PC-3 (cell line): ENCODE measurements at regions of chr6 and their contacts with region 1.

Region 1: GRCh38 chr6:134063966-134064445 is 11.6 kb upstream of the SLC2A12 start:
- DNase-seq: peak; percentile 74
- ATAC-seq: peak; percentile 86
- H3K4me3 ChIP-seq: no peak overlapping the region
- H3K27ac ChIP-seq: no peak overlapping the region
- H3K4me1 ChIP-seq: peaks cover 24% of the 10 kb centered on the region
- H3K27me3 ChIP-seq: no peaks in the 10 kb centered on the region
- CTCF ChIP-seq: peak; percentile 87

Region 2: GRCh38 chr6:133814797-133815196 is 249.2 kb before region 1 on chr6:
- CTCF ChIA-PET with region 1: no interaction called
- POLR2A ChIA-PET with region 1: no interaction called
- intact Hi-C with region 1: no loop called
- DNase-seq: peak; percentile 9
- ATAC-seq: no peak
- H3K4me3 ChIP-seq: no peak overlapping the region
- H3K27ac ChIP-seq: no peak overlapping the region
- H3K4me1 ChIP-seq: no peaks in the 10 kb centered on the region
- H3K27me3 ChIP-seq: no peaks in the 10 kb centered on the region
- CTCF ChIP-seq: no peak

Region 3: GRCh38 chr6:133923938-133924593 is 139.9 kb before region 1 on chr6:
- CTCF ChIA-PET with region 1: interaction called, 3 read pairs
- POLR2A ChIA-PET with region 1: no interaction called
- intact Hi-C with region 1: loop called (anchors 1 kb)
- DNase-seq: peak; percentile 76
- ATAC-seq: peak; percentile 88
- H3K4me3 ChIP-seq: no peak overlapping the region
- H3K27ac ChIP-seq: no peak overlapping the region
- H3K4me1 ChIP-seq: no peaks in the 10 kb centered on the region
- H3K27me3 ChIP-seq: no peaks in the 10 kb centered on the region
- CTCF ChIP-seq: peak; percentile 88

Region 4: DNA sequence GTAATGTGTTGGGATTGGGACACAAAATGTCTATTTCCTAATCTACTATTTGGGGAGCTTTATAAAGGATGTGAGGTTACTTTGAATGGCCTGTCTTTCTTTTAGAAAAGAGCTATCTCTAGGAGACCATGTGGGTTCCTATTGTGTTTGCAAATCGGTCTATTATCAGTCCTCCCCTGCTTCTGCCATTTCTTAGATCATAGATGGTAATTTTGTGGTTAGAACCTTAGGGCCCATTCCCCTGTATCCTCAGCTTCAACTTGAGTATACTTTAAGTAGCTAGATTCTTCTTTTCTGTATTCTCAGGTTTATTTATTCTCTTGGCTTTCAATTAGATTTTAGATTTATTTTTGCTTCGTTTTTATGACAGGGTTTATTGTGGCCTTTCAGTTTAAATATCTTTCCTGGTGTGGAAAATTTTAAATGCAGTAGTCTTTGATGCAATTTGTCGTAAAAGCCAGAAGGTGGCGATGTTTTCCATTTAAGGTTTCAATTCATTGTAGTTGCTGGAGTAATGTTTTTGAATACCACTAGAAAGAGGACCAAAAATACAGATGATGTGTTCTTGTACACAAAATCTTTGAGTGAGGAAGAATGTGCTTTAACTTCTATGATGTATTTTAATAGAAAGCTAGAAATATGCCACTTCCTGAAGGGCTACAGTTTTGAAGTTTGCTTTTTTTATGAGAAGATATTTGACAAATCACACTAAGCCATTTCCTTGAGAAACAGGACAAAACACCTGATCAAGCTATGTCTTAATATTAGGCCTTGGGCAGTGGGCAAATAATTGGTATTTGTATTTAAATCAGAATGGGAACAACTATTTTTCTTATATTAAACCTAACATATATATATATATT is 90.7 kb before region 1 on chr6:
- CTCF ChIA-PET with region 1: interaction called, 10 read pairs
- POLR2A ChIA-PET with region 1: no interaction called
- intact Hi-C with region 1: loop called (anchors 1 kb)
- DNase-seq: peak; percentile 68
- ATAC-seq: no peak
- H3K4me3 ChIP-seq: no peak overlapping the region
- H3K27ac ChIP-seq: no peak overlapping the region
- H3K4me1 ChIP-seq: peaks cover 19% of the 10 kb centered on the region
- H3K27me3 ChIP-seq: no peaks in the 10 kb centered on the region
- CTCF ChIP-seq: peak; percentile 80

Region 5: GRCh38 chr6:134035823-134036296 is 28.1 kb before region 1 on chr6:
- CTCF ChIA-PET with region 1: no interaction called
- POLR2A ChIA-PET with region 1: no interaction called
- intact Hi-C with region 1: loop called (anchors 1 kb)
- DNase-seq: peak; percentile 91
- ATAC-seq: peak; percentile 99
- H3K4me3 ChIP-seq: peak overlapping the region; percentile 49
- H3K27ac ChIP-seq: peak overlapping the region; percentile 99
- H3K4me1 ChIP-seq: peaks cover 36% of the 10 kb centered on the region
- H3K27me3 ChIP-seq: no peaks in the 10 kb centered on the region
- CTCF ChIP-seq: no peak

Region 6: DNA sequence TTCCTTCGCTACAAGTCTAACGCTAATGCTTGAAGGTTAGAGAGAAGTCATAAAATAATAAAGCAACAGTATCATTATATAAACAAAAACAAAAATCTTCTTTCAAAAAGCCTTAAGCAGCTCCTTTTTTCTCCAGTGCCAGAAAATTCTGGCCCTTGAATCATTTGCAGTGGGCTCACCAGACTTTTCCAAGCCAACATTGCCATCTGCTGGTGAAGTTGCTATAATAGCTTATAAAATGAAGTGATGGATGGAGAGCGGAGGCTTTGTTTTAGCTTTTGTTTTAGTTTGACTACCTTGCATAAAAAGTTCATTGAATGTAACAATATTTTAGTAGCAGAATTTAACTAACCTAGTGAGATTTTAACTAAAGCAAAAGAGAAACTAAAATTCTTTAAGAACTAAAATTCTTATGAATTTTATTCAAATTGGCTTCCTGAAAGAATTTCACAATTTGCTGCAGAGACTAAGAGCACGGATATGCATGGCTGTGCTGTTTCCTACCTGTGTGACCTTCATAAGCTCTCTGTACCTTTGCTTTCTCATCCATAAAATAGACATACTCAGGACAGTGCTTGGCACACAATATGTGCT is 33.2 kb after region 1 on chr6:
- CTCF ChIA-PET with region 1: interaction called, 3 read pairs
- POLR2A ChIA-PET with region 1: no interaction called
- intact Hi-C with region 1: loop called (anchors 2 kb)
- DNase-seq: peak; percentile 78
- ATAC-seq: peak; percentile 50; the same call in 1 of the 2 replicates
- H3K4me3 ChIP-seq: no peak overlapping the region
- H3K27ac ChIP-seq: no peak overlapping the region
- H3K4me1 ChIP-seq: peaks cover 4% of the 10 kb centered on the region; the same call in 1 of the 2 replicates
- H3K27me3 ChIP-seq: no peaks in the 10 kb centered on the region
- CTCF ChIP-seq: peak; percentile 74